ENCODE measurements at regions of chr16 and their contacts with region 1.

Region 1: DNA sequence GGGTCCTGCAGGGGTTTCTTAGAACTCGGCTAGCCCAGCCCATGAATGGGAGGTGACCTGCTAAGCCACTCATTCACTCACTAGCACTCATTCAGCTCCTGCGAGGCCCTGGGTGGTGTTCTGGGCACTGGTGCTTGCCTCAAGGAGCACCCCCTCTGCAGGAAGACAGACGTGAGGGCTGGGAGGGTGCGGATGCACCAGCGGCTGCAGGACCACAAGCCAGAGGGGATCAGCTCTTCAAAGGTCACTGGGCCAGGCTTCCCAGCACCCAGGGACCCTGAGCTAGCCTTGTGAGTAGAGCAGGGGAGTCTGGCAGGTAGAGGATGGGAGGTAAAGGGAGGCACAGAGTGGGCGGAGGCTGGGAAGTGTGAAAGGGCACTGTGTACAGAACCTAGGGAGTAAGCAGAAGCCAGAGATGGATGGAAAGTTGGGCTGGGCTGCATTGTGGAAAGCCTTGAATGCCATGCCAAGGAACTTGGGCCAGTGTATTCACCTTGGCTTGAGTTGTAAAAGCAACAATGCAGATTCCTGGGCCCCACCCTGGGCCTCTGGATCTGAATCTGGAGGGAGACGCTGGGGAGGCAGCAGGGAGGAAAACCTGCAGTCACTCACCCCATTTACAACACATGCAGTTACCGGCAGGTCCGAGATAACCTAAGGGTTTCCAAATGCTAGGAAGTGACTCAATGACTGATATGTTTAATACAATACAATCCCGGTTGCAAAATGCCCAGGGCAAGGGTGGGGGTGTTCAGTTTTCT is 1.7 kb downstream of the IL4R start:
- DNase-seq: peak; percentile 86
- H3K4me3 Mint-ChIP-seq: peak overlapping the region; percentile 99
- H3K27ac Mint-ChIP-seq: peak overlapping the region; percentile 97
- H3K4me1 Mint-ChIP-seq: peaks cover 59% of the 10 kb centered on the region
- H3K27me3 Mint-ChIP-seq: no peaks in the 10 kb centered on the region

Region 2: DNA sequence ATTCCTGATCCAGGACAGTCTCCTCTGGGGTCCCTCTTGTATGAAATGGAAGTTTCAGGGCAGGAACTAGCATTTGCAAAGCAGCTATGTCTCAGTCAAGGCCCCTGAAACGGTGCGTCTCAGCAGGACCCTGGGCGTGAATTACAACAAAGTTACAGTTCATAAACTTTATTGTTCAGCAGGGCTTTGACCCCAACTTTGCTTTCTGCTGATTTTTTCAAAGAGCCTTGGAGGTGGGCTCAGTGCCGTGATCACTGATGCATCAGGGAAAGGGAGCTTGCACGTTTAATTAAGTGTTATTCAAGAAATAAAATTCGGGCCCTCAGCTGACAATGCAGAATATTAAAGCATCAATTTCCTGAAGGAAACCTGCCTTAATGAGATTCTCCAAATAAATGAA is 508.8 kb before region 1 on chr16:
- CTCF ChIA-PET with region 1: no interaction called
- intact Hi-C with region 1: no loop called
- DNase-seq: no peak
- H3K4me3 Mint-ChIP-seq: no peak overlapping the region
- H3K27ac Mint-ChIP-seq: no peak overlapping the region
- H3K4me1 Mint-ChIP-seq: no peaks in the 10 kb centered on the region
- H3K27me3 Mint-ChIP-seq: peaks cover 18% of the 10 kb centered on the region

Region 3: GRCh38 chr16:27169511-27170071 is 145.9 kb before region 1 on chr16:
- CTCF ChIA-PET with region 1: interaction called, 3 read pairs
- intact Hi-C with region 1: loop called (anchors 2 kb)
- DNase-seq: peak; percentile 92
- H3K4me3 Mint-ChIP-seq: no peak overlapping the region
- H3K27ac Mint-ChIP-seq: peak overlapping the region; percentile 87
- H3K4me1 Mint-ChIP-seq: peaks cover 55% of the 10 kb centered on the region
- H3K27me3 Mint-ChIP-seq: no peaks in the 10 kb centered on the region

Region 4: DNA sequence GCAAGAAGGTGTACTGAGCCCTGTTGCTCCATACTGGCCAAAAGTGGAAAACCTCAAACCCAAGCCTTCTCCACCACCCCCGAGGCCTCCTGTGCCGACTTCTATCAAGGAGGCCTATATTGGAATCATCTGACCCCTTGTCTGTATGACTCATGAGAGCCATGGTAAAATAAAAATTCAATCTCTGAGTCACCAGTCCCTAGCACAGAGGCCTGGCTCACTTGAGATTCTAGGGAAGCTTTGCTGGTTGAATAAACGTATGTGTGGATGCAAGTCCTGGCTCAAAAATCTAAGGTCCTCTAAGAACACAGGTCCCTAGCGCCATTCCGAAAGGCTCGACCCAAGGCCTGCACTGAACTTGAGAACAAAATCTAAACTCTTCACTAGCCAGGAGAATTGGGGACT is 61.9 kb before region 1 on chr16:
- CTCF ChIA-PET with region 1: interaction called, 5 read pairs
- intact Hi-C with region 1: loop called (anchors 1 kb)
- DNase-seq: no peak
- H3K4me3 Mint-ChIP-seq: peak overlapping the region; percentile 44
- H3K27ac Mint-ChIP-seq: peak overlapping the region; percentile 92
- H3K4me1 Mint-ChIP-seq: peaks cover 91% of the 10 kb centered on the region
- H3K27me3 Mint-ChIP-seq: no peaks in the 10 kb centered on the region

Region 5: DNA sequence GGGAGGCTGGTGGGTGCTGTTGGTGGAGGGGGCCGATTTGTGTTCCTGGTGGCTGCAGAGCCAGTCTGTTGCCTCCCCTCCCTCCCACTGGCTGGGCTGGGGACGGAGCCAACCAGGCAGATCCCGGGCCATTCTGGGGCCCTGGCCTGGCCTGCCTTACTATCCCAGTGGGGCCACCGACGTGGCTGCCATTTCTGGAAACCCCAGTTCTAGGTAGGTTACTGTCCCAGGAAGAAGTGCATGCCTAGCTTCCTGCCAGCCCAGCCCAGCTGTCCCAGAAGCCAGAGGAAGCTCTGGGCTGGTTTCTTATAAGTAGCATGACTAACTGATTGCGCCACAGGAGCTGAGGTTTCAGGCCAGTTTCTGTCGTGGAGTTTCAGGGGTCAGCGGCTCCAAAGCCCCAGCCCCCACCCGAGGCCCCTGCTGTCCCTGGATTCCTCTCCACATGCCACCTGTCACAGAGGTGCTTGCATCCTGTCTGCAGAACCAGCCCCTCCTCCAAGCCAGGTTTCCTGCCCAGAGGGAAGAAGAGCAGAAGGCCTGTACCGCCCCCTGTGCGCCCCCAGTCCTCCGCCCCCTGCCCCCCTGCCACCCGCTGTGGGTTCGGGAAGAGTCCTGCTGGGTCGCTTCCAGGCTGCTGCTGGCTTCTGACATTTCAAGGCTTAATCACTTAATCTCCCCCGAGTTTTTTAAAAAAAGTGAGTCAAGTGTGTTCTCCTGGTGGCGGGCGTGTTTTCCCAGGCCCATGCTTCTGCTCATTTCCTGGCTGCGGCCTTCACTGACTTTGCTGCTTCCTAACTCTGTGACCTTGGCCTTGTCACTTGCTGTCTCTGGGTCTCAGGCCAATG is 11.5 kb after region 1 on chr16:
- CTCF ChIA-PET with region 1: interaction called, 4 read pairs
- intact Hi-C with region 1: loop called (anchors 1 kb)
- DNase-seq: peak; percentile 69
- H3K4me3 Mint-ChIP-seq: peak overlapping the region; percentile 55
- H3K27ac Mint-ChIP-seq: peak overlapping the region; percentile 91
- H3K4me1 Mint-ChIP-seq: peaks cover 84% of the 10 kb centered on the region
- H3K27me3 Mint-ChIP-seq: no peaks in the 10 kb centered on the region

Region 6: DNA sequence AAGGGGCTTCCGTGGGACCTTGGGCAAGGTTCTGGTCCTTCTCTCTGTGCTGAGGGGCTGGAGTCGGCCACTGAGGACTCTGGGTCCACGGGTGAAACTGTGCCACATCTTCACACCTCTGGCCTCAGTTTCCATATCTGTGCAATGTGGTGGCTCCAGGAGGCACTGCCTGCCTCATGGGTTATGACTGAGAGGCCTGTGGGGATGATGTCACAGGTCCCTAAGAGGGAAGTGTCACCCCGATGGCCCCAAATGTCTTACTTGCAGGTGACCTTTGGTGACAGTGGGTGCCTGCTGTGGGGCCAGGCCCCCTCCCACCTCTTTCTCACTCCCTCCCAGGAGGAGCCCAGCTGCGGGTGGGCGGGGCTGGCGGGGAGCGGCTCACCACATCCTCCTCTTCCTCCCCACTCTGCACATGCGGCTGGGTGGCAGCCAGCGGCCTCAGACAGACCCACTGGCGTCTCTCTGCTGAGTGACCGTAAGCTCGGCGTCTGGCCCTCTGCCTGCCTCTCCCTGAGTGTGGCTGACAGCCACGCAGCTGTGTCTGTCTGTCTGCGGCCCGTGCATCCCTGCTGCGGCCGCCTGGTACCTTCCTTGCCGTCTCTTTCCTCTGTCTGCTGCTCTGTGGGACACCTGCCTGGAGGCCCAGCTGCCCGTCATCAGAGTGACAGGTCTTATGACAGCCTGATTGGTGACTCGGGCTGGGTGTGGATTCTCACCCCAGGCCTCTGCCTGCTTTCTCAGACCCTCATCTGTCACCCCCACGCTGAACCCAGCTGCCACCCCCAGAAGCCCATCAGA is 86.5 kb after region 1 on chr16 and contains the start of gene IL21R:
- CTCF ChIA-PET with region 1: interaction called, 4 read pairs
- intact Hi-C with region 1: loop called (anchors 1 kb)
- DNase-seq: peak; percentile 93
- H3K4me3 Mint-ChIP-seq: peak within 1 kb of the TSS; percentile 98
- H3K27ac Mint-ChIP-seq: peak within 1 kb of the TSS; percentile 100
- H3K4me1 Mint-ChIP-seq: peaks cover 43% of the 10 kb centered on the region
- H3K27me3 Mint-ChIP-seq: no peaks in the 10 kb centered on the region
- total RNA-seq, gene IL21R: 93.8 to 99.2 TPM

Region 7: GRCh38 chr16:27432558-27432957 is 117.1 kb after region 1 on chr16:
- CTCF ChIA-PET with region 1: no interaction called
- intact Hi-C with region 1: no loop called
- DNase-seq: no peak
- H3K4me3 Mint-ChIP-seq: no peak overlapping the region
- H3K27ac Mint-ChIP-seq: peak overlapping the region; percentile 60
- H3K4me1 Mint-ChIP-seq: peaks cover 47% of the 10 kb centered on the region
- H3K27me3 Mint-ChIP-seq: no peaks in the 10 kb centered on the region

Region 8: DNA sequence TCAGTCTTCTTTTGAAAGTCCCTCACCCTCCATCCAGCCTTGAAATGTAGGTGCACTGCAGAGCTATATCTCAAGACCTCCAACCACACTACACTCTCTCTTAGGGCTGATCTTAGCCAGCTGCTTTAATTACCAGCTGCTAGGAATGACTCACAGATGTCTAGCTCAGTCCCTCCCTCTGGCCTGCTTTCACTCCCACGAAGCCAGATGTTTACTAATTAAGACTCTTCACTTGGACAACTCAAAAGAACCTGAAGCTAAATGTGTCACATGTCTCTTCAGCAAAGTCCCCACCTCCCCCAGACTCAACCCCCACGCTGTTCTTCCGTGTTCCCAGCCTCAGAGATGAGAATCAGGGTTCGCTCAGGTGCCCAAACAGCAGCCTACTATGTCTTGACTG is 231.7 kb after region 1 on chr16:
- CTCF ChIA-PET with region 1: no interaction called
- intact Hi-C with region 1: no loop called
- DNase-seq: no peak
- H3K4me3 Mint-ChIP-seq: no peak overlapping the region
- H3K27ac Mint-ChIP-seq: no peak overlapping the region
- H3K4me1 Mint-ChIP-seq: peaks cover 38% of the 10 kb centered on the region
- H3K27me3 Mint-ChIP-seq: no peaks in the 10 kb centered on the region